ENCODE measurements at regions of chr4 and their contacts with region 1.

Region 1: GRCh38 chr4:4575273-4576211 is 33.7 kb upstream of the STX18 start:
- DNase-seq: peak; percentile 55 to 77 (median 61)
- H3K4me3 ChIP-seq: peak overlapping the region; percentile 44
- H3K4me3 Mint-ChIP-seq: peak overlapping the region; percentile 67 to 87 (median 83)
- H3K27ac ChIP-seq: peak overlapping the region; percentile 20
- H3K27ac Mint-ChIP-seq: peak overlapping the region in 7 of 8 donors; percentile 8 to 87 (median 55)
- H3K4me1 ChIP-seq: peaks cover 11% of the 10 kb centered on the region
- H3K4me1 Mint-ChIP-seq: peaks cover 14 to 18% (median 15%) of the 10 kb centered on the region in 3 donors
- H3K27me3 ChIP-seq: no peaks in the 10 kb centered on the region
- H3K27me3 Mint-ChIP-seq: peaks cover 0 to 6% of the 10 kb centered on the region in 2 donors

Region 2: DNA sequence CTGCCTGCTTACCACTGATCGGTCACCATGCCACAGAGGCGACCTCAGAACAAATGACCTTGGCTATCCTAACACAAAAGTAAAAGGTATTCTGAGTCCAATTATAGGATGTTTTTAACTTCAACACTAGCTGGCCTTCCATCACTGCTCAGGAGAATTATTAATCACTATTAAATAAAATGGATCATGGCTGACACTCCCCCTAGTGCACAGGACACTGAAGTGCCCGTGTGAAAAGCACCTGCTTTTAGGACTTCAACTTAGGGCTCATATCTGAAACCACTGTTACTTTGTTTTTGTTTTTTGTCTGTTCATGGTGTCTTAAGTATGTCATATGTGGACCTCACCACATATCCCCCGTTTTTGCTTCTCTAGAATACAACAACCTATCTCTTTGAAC is 67.6 kb before region 1 on chr4:
- CTCF ChIA-PET with region 1: no interaction called
- POLR2A ChIA-PET with region 1: interaction called, 10 read pairs
- DNase-seq: no peak
- H3K4me3 ChIP-seq: no peak overlapping the region
- H3K4me3 Mint-ChIP-seq: no peak overlapping the region
- H3K27ac ChIP-seq: no peak overlapping the region
- H3K27ac Mint-ChIP-seq: no peak overlapping the region
- H3K4me1 ChIP-seq: peaks cover 4% of the 10 kb centered on the region
- H3K4me1 Mint-ChIP-seq: peaks cover 9 to 25% (median 20%) of the 10 kb centered on the region in 3 donors
- H3K27me3 ChIP-seq: no peaks in the 10 kb centered on the region
- H3K27me3 Mint-ChIP-seq: no peaks in the 10 kb centered on the region

Measured in CD8-positive, alpha-beta memory T cell (primary cell).